Mammary epithelial cell (primary cell): ENCODE measurements at regions of chr18 and their contacts with region 1.

Region 1: DNA sequence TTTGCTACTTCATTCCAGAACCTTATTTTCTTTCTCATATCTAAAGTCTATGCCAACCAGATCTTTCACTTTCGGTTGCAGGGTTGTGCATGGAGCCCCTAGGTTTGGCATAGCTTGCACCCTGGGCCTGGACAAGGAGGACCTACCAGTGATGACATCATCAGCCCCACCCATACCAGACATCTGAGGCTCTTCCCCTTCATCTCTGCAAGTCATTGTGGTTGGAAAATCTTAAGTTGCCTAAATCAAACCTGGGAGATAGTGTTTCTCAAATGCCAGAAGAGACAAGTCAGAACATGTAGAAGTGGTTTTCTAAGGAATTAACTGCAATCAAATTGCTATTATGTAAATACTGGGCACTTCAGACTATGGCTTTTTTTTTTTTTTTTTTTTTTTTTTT is 363.3 kb downstream of the ZNF516 start:
- DNase-seq: peak; percentile 99
- H3K4me3 ChIP-seq: no peak overlapping the region
- H3K27ac ChIP-seq: peak overlapping the region; percentile 99
- H3K4me1 ChIP-seq: peaks cover 17% of the 10 kb centered on the region
- H3K27me3 ChIP-seq: no peaks in the 10 kb centered on the region
- CTCF ChIP-seq: no peak

Region 2: DNA sequence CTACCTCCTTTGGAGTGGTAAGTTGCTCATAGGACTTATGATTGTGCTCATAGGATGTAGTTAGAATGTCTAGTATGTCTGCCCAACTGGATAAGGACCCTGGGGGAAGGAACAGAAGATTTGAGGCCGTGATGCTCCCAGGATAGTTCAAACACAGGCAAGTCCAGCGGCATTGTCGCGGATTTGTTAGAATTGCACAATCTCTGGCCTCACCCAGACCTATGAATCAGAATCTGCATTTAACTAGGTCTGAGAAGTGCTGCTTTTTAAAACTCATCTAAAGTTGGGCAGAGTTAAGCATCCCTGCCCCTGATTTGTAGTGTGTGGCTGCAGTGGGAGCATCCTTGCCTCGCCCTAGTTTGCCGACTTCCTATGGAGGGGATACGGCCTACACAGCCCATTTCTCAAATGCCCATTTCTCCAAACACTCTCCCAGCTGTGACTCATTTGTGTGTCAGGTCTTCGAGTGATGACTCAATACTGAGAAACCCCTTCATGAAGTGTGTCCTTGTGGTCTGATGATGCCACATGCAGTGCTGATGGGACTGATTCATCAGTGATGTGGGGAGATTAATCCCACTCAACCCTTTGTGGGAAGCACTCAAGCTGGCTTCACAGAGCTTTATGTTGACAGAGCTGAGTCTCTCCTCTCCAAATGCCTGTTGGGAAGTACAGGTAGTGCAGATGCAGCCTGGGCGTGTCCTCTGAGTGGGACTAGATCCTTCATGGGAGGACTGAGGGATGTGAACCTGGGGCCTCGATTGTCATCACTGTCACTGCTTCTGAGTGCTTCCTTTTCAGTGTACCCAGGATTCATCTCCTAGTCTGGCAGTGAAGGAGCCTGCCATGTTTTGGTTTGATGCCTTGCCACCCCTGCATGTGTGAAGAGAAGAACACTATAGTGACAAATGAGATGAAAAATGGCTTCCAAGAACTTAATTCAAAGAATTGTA is 722.9 kb before region 1 on chr18:
- CTCF ChIA-PET with region 1: no interaction called
- dilution Hi-C with region 1: no loop called
- in situ Hi-C with region 1: no loop called
- intact Hi-C with region 1: loop called (anchors 2 kb)
- DNase-seq: peak; percentile 100
- H3K4me3 ChIP-seq: no peak overlapping the region
- H3K27ac ChIP-seq: peak overlapping the region; percentile 76
- H3K4me1 ChIP-seq: peaks cover 29% of the 10 kb centered on the region
- H3K27me3 ChIP-seq: no peaks in the 10 kb centered on the region
- CTCF ChIP-seq: no peak

Region 3: DNA sequence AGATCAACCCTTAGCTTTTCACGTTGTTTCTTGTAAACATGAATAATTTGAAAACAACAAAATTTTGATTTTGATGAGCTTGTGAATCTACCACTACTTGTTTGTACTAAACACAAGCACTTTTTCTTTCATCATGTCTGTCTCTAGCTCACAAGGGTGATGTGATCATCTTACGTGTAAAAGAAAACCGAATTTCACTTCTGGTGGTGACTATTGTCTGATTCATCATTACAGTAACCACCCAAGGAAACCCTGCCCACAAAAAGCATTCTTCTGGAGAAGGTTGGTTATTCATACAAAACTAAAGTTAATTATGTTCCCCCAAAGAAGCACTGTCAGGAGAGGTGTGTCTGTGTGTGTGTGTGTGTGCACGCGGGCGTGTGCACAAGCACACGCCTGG is 77.9 kb after region 1 on chr18:
- CTCF ChIA-PET with region 1: no interaction called
- dilution Hi-C with region 1: no loop called
- in situ Hi-C with region 1: no loop called
- intact Hi-C with region 1: loop called (anchors 10 kb)
- DNase-seq: peak; percentile 90
- H3K4me3 ChIP-seq: no peak overlapping the region
- H3K27ac ChIP-seq: peak overlapping the region; percentile 53
- H3K4me1 ChIP-seq: peaks cover 14% of the 10 kb centered on the region
- H3K27me3 ChIP-seq: no peaks in the 10 kb centered on the region
- CTCF ChIP-seq: no peak

Region 4: GRCh38 chr18:76234291-76235060 is 102.7 kb after region 1 on chr18:
- CTCF ChIA-PET with region 1: no interaction called
- dilution Hi-C with region 1: no loop called
- in situ Hi-C with region 1: no loop called
- intact Hi-C with region 1: no loop called
- DNase-seq: no peak
- H3K4me3 ChIP-seq: no peak overlapping the region
- H3K27ac ChIP-seq: no peak overlapping the region
- H3K4me1 ChIP-seq: no peaks in the 10 kb centered on the region
- H3K27me3 ChIP-seq: no peaks in the 10 kb centered on the region
- CTCF ChIP-seq: no peak